ENCODE measurements at regions of chr9 and their contacts with region 1.

Region 1: DNA sequence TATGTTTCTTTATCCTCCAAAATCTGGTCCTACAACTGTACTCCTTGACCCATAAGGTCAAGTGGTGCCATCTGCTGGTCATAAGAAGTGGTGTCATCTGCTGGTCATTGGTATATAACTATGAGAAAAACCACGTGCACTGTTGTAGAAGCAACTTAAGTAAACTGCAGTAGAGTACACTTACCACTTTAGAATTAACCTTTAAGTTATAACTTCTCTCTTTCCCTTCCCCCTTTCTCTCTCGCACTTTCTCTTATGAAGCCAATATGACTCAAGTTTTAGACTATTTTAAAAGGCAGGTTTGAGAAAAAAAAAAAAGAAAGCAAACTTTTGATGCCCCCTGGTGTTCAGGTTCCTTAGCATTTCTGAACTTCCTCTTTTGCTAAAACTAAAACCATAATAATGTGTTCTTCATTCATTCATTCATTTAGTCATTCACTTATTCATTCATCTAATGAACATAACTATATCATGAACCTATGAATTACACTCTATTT is 12.8 kb upstream of the MTAP start:
- DNase-seq: no peak

Region 2: GRCh38 chr9:21174671-21175070 is 614.9 kb before region 1 on chr9:
- intact Hi-C with region 1: no loop called
- DNase-seq: no peak

Region 3: GRCh38 chr9:21239911-21240310 is 549.7 kb before region 1 on chr9 and contains the start of gene IFNA14:
- intact Hi-C with region 1: loop called (anchors 5 kb)
- DNase-seq: no peak
- total RNA-seq, gene IFNA14: not detected

Region 4: GRCh38 chr9:21252721-21253547 is 536.7 kb before region 1 on chr9:
- intact Hi-C with region 1: loop called (anchors 5 kb)
- DNase-seq: no peak

Region 5: DNA sequence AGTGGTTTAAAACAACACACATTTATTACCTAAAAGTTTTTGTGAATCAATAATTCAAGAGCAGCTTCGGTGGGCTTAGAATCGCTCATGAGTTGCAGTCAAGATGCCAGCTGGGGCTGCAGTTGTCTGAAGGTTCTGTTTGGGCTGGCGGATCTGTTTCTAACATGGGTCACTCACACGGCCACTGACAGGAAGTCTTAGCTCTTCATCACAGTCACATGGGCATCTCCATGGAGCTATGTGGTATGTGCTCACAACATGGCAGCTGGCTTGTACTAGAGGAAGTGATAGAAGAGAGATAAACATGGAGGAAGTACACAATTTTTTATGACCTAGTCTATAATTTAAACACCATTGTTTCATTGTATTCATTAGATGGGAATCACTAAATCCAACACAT is 465.5 kb before region 1 on chr9:
- intact Hi-C with region 1: loop called (anchors 5 kb)
- DNase-seq: no peak

Region 6: DNA sequence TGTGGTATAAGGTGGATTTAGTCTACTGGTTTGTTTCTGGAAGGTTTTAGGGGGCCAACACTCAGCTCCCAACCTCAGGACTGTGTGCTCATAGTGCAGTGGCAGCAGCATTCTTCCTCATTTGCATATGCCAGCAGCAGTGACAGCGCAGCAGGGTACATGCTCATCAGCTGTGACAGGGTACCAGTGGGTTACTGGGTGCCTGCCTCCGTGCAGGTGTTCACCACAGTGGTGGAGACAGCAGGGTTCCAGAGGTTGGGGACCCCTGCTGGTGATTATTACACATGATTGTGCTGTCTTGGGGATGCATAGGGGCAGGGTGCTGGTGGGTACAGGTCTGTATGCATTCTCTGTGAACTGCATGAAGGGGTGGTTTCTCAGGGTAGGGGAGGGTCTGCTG is 262.0 kb before region 1 on chr9:
- intact Hi-C with region 1: no loop called
- DNase-seq: no peak

Region 7: DNA sequence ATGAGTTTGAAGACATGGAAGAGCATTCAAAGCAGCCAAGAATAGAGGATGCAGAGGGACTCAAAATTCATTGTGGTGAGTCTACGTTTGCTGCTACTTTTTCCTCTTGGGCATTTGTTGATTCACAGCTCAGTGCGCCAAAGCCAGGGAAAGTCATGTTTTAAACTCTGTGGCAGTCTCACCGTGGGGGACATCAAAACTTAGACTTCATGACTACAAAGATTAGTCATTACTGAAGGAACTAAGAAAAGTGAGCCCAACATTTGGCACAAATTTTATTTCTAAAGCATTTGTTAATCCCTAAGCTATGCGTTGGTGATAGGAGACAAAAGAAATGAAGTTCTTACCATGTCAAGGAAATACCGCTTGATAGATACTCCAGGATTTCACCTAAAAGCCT is 60.8 kb before region 1 on chr9:
- intact Hi-C with region 1: no loop called
- DNase-seq: no peak

Region 8: GRCh38 chr9:21883642-21884041 is 94.1 kb after region 1 on chr9:
- intact Hi-C with region 1: no loop called
- DNase-seq: no peak

Measured in cardiac septum (tissue), 1 donor.